Natural killer cell (primary cell): ENCODE measurements at regions of chr1 and their contacts with region 1.

Region 1: DNA sequence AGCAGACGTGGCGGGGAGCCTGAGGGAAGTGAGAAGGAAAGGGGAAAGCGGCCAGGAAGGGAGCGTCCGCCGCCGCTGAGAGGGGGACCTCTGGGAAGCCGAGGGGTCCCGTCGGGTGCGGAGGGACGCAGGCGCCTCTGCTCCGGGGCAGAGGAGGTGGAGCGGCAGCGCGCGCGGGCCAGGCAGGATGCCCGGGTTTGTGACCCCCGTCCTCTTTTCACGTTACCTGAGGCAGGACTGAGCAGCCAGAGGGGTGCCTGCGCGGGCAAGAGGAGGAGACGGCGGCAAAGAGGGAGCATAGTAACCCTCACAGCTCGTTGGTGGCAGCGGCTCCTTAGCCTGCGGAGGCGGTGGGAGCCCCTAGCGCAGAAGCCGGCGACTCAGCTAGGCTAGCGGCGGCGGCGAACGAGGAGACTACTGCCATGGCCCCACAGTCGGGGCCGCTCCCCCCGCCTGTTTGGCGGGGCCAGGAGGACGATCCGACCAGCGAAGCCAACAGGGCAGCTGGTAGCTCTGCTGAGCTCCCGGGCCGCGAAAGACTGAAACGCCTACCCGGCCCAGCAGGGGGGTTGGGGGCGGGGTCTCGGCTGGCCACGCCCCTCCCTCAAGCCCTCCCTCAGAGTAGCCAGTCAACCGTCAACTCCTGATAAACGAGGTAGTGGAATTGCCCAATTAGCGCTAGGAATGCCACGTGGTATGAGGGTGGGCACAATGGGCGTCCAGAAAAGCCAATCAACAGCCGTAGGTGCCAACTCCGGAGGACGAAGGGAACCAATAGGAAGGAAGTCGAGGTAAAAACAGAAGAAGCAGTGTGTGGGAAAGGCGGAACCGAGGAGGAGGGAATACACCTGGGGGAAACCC is at the start of gene TESK2:
- DNase-seq: peak; percentile 97 to 99
- ATAC-seq: peak; percentile 91 to 99 (median 92)
- H3K4me3 ChIP-seq: peak within 1 kb of the TSS; percentile 73
- H3K4me3 Mint-ChIP-seq: no peak within 1 kb of the TSS
- H3K27ac ChIP-seq: peak within 1 kb of the TSS; percentile 65
- H3K27ac Mint-ChIP-seq: no peak within 1 kb of the TSS
- H3K4me1 ChIP-seq: peaks cover 18% of the 10 kb centered on the region
- H3K4me1 Mint-ChIP-seq: peaks cover 5 to 6% of the 10 kb centered on the region in 2 donors
- H3K27me3 ChIP-seq: no peaks in the 10 kb centered on the region
- H3K27me3 Mint-ChIP-seq: no peaks in the 10 kb centered on the region
- CTCF ChIP-seq: no peak
- total RNA-seq, gene TESK2: 5.1 to 7.4 (median 6.0) TPM

Region 2: DNA sequence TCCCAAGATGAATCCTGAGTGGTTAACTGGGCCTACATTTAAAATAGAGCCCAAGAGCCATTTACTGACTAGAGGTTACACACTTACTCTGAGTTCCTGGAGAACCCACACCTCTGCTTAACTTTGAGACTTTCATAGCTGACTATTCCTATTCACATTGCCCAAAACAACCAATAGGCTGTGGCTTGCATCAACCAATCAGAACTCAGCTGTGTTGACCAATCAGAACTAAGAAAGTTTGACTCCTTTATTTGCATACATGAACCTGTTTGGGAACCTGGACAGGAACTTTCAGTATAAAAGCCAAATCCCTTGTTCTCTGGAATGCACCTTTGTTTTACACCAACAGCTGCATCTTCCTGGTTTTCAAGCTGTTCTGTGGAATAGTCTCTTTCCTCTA is 294.0 kb before region 1 on chr1:
- intact Hi-C with region 1: no loop called
- DNase-seq: no peak
- ATAC-seq: no peak
- H3K4me3 ChIP-seq: no peak overlapping the region
- H3K4me3 Mint-ChIP-seq: no peak overlapping the region
- H3K27ac ChIP-seq: no peak overlapping the region
- H3K27ac Mint-ChIP-seq: no peak overlapping the region
- H3K4me1 ChIP-seq: no peaks in the 10 kb centered on the region
- H3K4me1 Mint-ChIP-seq: no peaks in the 10 kb centered on the region
- H3K27me3 ChIP-seq: no peaks in the 10 kb centered on the region
- H3K27me3 Mint-ChIP-seq: peaks cover 0 to 18% of the 10 kb centered on the region in 2 donors
- CTCF ChIP-seq: no peak

Region 3: GRCh38 chr1:45339789-45340570 is 150.9 kb before region 1 on chr1 and contains the starts of genes MUTYH and TOE1:
- intact Hi-C with region 1: loop called (anchors 5 kb)
- DNase-seq: peak; percentile 81 to 93
- ATAC-seq: peak; percentile 82 to 92 (median 85)
- H3K4me3 ChIP-seq: peak within 1 kb of the TSS; percentile 95
- H3K4me3 Mint-ChIP-seq: peak within 1 kb of the TSS; percentile 99
- H3K27ac ChIP-seq: peak within 1 kb of the TSS; percentile 99
- H3K27ac Mint-ChIP-seq: peak within 1 kb of the TSS; percentile 94 to 96
- H3K4me1 ChIP-seq: peaks cover 27% of the 10 kb centered on the region
- H3K4me1 Mint-ChIP-seq: peaks cover 48 to 49% of the 10 kb centered on the region in 2 donors
- H3K27me3 ChIP-seq: no peaks in the 10 kb centered on the region
- H3K27me3 Mint-ChIP-seq: no peaks in the 10 kb centered on the region
- CTCF ChIP-seq: no peak
- total RNA-seq, gene MUTYH: 44.0 to 55.6 (median 51.5) TPM
- total RNA-seq, gene TOE1: 23.2 to 36.8 (median 28.2) TPM

Region 4: GRCh38 chr1:45359882-45360513 is 130.9 kb before region 1 on chr1:
- intact Hi-C with region 1: loop called (anchors 1 kb)
- DNase-seq: peak; percentile 35 to 74
- ATAC-seq: peak; percentile 52 to 71 (median 55)
- H3K4me3 ChIP-seq: no peak overlapping the region
- H3K4me3 Mint-ChIP-seq: no peak overlapping the region
- H3K27ac ChIP-seq: no peak overlapping the region
- H3K27ac Mint-ChIP-seq: no peak overlapping the region
- H3K4me1 ChIP-seq: no peaks in the 10 kb centered on the region
- H3K4me1 Mint-ChIP-seq: peaks cover 0 to 4% of the 10 kb centered on the region in 2 donors
- H3K27me3 ChIP-seq: no peaks in the 10 kb centered on the region
- H3K27me3 Mint-ChIP-seq: no peaks in the 10 kb centered on the region
- CTCF ChIP-seq: peak; percentile 64

Region 5: DNA sequence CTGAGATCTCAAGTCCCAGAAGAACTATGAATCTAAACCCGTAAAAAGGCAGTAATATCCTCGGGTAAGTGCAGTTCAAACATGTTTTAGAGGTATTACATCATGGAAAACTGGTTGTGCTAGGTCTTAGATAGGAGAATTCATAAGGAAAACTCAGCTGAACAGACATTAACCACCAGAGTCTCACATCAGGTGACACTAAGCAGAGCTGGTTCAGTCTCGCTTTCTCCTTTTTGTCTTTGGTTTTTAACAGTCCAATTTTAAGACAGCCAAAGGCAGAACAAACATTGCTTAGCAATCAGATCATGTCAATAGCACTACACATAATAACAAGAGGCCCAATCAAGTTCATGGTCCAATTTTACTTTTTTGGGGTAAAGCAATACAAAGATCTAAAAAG is 87.6 kb before region 1 on chr1:
- intact Hi-C with region 1: no loop called
- DNase-seq: no peak
- ATAC-seq: no peak
- H3K4me3 ChIP-seq: no peak overlapping the region
- H3K4me3 Mint-ChIP-seq: no peak overlapping the region
- H3K27ac ChIP-seq: no peak overlapping the region
- H3K27ac Mint-ChIP-seq: no peak overlapping the region
- H3K4me1 ChIP-seq: no peaks in the 10 kb centered on the region
- H3K4me1 Mint-ChIP-seq: no peaks in the 10 kb centered on the region
- H3K27me3 ChIP-seq: no peaks in the 10 kb centered on the region
- H3K27me3 Mint-ChIP-seq: no peaks in the 10 kb centered on the region
- CTCF ChIP-seq: no peak

Region 6: DNA sequence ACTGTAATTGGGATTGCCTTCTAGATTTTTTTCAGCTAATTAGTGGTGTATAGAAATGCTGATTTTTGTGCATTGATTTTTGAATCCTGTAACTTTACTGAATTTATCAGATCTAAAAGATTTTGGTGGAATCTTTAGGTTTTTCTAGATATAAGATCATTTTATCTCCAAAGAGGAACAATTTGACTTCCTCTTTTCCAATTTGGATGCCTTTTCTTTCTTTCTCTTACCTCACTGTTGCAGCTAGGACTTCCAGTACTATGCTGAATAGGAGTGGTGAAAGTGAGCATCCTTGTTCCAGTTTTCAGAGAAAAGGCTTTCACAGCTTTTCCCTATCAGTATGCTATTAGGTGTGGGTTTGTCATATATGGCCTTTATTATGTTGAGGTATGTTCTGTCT is 53.5 kb before region 1 on chr1:
- intact Hi-C with region 1: no loop called
- DNase-seq: no peak
- ATAC-seq: no peak
- H3K4me3 ChIP-seq: no peak overlapping the region
- H3K4me3 Mint-ChIP-seq: no peak overlapping the region
- H3K27ac ChIP-seq: no peak overlapping the region
- H3K27ac Mint-ChIP-seq: no peak overlapping the region
- H3K4me1 ChIP-seq: no peaks in the 10 kb centered on the region
- H3K4me1 Mint-ChIP-seq: no peaks in the 10 kb centered on the region
- H3K27me3 ChIP-seq: no peaks in the 10 kb centered on the region
- H3K27me3 Mint-ChIP-seq: no peaks in the 10 kb centered on the region
- CTCF ChIP-seq: no peak

Region 7: DNA sequence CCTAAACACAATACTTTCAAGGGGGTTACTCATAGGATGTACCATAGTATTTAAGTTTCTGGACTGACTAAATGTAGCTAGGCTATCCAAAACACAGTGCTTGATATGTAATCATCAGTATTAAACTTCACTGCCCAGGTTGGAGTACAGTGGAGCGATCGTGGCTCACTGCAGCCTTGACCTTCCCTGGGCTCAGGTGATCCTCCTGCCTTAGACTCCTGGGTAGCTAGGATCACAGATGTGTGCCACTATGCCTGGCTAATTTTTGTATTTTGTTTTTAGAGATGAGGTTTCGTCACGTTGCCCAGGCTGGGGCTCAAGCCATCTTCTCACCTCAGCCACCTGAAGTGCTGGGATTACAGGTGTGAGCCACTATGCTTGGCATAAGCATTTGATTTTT is 103.6 kb after region 1 on chr1:
- intact Hi-C with region 1: no loop called
- DNase-seq: no peak
- ATAC-seq: no peak
- H3K4me3 ChIP-seq: no peak overlapping the region
- H3K4me3 Mint-ChIP-seq: no peak overlapping the region
- H3K27ac ChIP-seq: no peak overlapping the region
- H3K27ac Mint-ChIP-seq: no peak overlapping the region
- H3K4me1 ChIP-seq: no peaks in the 10 kb centered on the region
- H3K4me1 Mint-ChIP-seq: peaks cover 13 to 18% of the 10 kb centered on the region in 2 donors
- H3K27me3 ChIP-seq: no peaks in the 10 kb centered on the region
- H3K27me3 Mint-ChIP-seq: no peaks in the 10 kb centered on the region
- CTCF ChIP-seq: no peak